ENCODE measurements at regions of chr1 and their contacts with region 1.

Region 1: GRCh38 chr1:10796019-10796944 is at the start of gene CASZ1:
- DNase-seq: peak; percentile 88
- H3K4me3 ChIP-seq: peak within 1 kb of the TSS; percentile 47 to 89 (median 70)
- H3K27ac ChIP-seq: peak within 1 kb of the TSS; percentile 90 to 97 (median 95)
- H3K4me1 ChIP-seq: peaks cover 0 to 46% (median 20%) of the 10 kb centered on the region in 4 donors
- H3K27me3 ChIP-seq: peaks cover 32% of the 10 kb centered on the region
- CTCF ChIP-seq: no peak
- EP300 ChIP-seq: no peak
- POLR2A ChIP-seq: peak; percentile 74
- total RNA-seq, gene CASZ1: 39.1 to 215 (median 115) TPM

Region 2: GRCh38 chr1:10530281-10530740 is 266.0 kb before region 1 on chr1:
- in situ Hi-C with region 1: no loop called
- intact Hi-C with region 1: loop called (anchors 1 kb)
- DNase-seq: peak; percentile 45
- H3K4me3 ChIP-seq: no peak overlapping the region
- H3K27ac ChIP-seq: peak overlapping the region; percentile 53 to 76 (median 70)
- H3K4me1 ChIP-seq: peaks cover 0 to 23% (median 12%) of the 10 kb centered on the region in 4 donors
- H3K27me3 ChIP-seq: no peaks in the 10 kb centered on the region
- CTCF ChIP-seq: peak; percentile 48 to 61 (median 52)
- EP300 ChIP-seq: no peak
- POLR2A ChIP-seq: no peak

Region 3: GRCh38 chr1:10651389-10651766 is 144.9 kb before region 1 on chr1:
- in situ Hi-C with region 1: no loop called
- intact Hi-C with region 1: loop called (anchors 10 kb)
- DNase-seq: no peak
- H3K4me3 ChIP-seq: no peak overlapping the region
- H3K27ac ChIP-seq: peak overlapping the region; percentile 10 to 82 (median 70)
- H3K4me1 ChIP-seq: peaks cover 0 to 5% (median 0%) of the 10 kb centered on the region in 4 donors
- H3K27me3 ChIP-seq: no peaks in the 10 kb centered on the region
- CTCF ChIP-seq: no peak
- EP300 ChIP-seq: no peak
- POLR2A ChIP-seq: no peak

Region 4: DNA sequence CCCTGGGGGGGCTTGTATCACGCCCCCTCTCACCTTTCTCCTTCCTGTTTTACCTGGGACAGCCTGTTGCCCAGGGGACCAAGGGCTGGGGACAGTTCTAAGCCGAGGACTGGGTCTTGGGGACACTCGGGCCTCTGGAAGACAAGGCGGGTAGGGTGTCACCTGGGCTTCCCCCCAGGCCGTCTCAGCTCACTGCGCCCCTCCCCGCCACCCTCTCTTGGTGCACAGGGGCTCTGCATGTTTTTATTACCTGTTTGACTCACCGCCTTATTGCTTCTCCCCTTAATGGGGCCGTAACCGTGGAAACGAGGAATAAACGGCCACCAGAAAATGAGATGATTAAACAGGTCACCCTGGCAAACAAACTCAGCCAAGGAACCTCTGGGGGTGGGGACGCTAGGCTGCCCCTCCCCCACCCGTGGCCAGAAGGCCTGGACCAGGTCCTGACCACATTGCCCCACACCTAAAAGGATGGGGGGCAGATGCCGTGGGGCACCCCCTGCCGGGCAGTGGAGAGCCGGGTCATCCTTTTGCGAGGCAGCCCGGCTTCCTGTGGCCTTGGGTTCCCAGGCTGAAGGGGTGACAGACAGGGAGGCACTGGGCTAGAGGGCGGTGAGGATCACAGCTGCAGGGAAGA is 109.8 kb before region 1 on chr1:
- in situ Hi-C with region 1: no loop called
- intact Hi-C with region 1: loop called (anchors 2 kb)
- DNase-seq: peak; percentile 31
- H3K4me3 ChIP-seq: no peak overlapping the region
- H3K27ac ChIP-seq: peak overlapping the region; percentile 79 to 95 (median 94)
- H3K4me1 ChIP-seq: peaks cover 65 to 99% (median 79%) of the 10 kb centered on the region in 4 donors
- H3K27me3 ChIP-seq: no peaks in the 10 kb centered on the region
- CTCF ChIP-seq: peak in 1 of 5 experiments; percentile 36
- EP300 ChIP-seq: no peak
- POLR2A ChIP-seq: no peak

Region 5: GRCh38 chr1:10731041-10731440 is 65.2 kb before region 1 on chr1:
- in situ Hi-C with region 1: no loop called
- intact Hi-C with region 1: loop called (anchors 10 kb)
- DNase-seq: no peak
- H3K4me3 ChIP-seq: no peak overlapping the region
- H3K27ac ChIP-seq: no peak overlapping the region
- H3K4me1 ChIP-seq: peaks cover 0 to 20% (median 11%) of the 10 kb centered on the region in 4 donors
- H3K27me3 ChIP-seq: no peaks in the 10 kb centered on the region
- CTCF ChIP-seq: no peak
- EP300 ChIP-seq: no peak
- POLR2A ChIP-seq: no peak